ENCODE measurements at regions of chr1 and their contacts with region 1.

Region 1: GRCh38 chr1:61724813-61725694 is at the start of gene TM2D1:
- DNase-seq: peak; percentile 82 to 89
- ATAC-seq: peak; percentile 100
- H3K4me3 ChIP-seq: peak within 1 kb of the TSS; percentile 95
- H3K27ac ChIP-seq: peak within 1 kb of the TSS; percentile 90 to 91
- H3K4me1 ChIP-seq: peaks cover 13% of the 10 kb centered on the region; the same call in 1 of the 3 replicates
- CTCF ChIP-seq: no peak
- EP300 ChIP-seq: no peak
- POLR2A ChIP-seq: peak; percentile 96
- RAD21 ChIP-seq: no peak
- polyA plus RNA-seq, gene TM2D1: 42.9 and 54.2 TPM in 2 replicates

Region 2: GRCh38 chr1:61674221-61674620 is 50.8 kb before region 1 on chr1:
- CTCF ChIA-PET with region 1: no interaction called
- POLR2A ChIA-PET with region 1: no interaction called
- DNase-seq: no peak
- ATAC-seq: no peak
- H3K4me3 ChIP-seq: no peak overlapping the region
- H3K27ac ChIP-seq: no peak overlapping the region
- H3K4me1 ChIP-seq: 0 out of 3 replicates have a peak, but pooled peaks cover 5% of the 10 kb centered on the region
- CTCF ChIP-seq: no peak
- EP300 ChIP-seq: no peak
- POLR2A ChIP-seq: no peak
- RAD21 ChIP-seq: no peak

Region 3: DNA sequence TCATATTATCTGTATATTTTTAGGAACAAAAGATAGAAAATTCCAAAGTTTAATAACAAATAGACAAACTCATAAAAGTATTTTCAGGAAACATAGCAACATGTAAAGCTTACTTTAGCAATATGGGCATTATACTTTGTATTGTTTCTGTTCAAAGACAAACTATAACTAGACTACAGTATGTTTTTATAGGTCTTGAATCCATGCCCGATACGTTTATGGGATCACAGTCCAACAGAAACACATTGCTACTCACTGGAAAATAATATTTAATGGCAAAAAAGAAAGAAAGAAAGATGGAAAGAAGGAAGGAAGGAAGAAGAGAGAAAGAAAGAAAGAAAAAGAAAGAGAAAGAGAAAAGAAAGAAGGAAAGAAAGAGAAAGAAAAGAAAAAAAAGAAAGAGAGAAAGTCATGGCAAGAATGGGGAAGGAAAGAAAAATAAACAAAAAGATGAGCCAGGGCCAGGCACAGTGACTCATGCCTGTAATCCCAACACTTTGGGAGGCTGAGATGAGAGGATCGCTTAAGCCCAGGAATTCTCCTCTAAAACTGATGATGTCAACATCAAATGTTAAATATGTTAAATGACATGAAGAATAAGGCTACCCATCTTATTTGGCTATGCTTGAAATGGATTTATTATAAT is 32.8 kb before region 1 on chr1:
- CTCF ChIA-PET with region 1: no interaction called
- POLR2A ChIA-PET with region 1: no interaction called
- DNase-seq: peak in 1 of 2 experiments; percentile 44
- ATAC-seq: peak in 1 of 2 experiments; percentile 85; a peak in 3 of 6 replicates
- H3K4me3 ChIP-seq: no peak overlapping the region
- H3K27ac ChIP-seq: peak overlapping the region; percentile 35 to 57; a peak in 3 of 6 replicates
- H3K4me1 ChIP-seq: peaks cover 13% of the 10 kb centered on the region
- CTCF ChIP-seq: no peak
- EP300 ChIP-seq: no peak
- POLR2A ChIP-seq: no peak
- RAD21 ChIP-seq: no peak

Region 4: GRCh38 chr1:61776091-61776490 is 51.0 kb after region 1 on chr1:
- CTCF ChIA-PET with region 1: no interaction called
- POLR2A ChIA-PET with region 1: no interaction called
- DNase-seq: no peak
- ATAC-seq: no peak
- H3K4me3 ChIP-seq: no peak overlapping the region
- H3K27ac ChIP-seq: no peak overlapping the region
- H3K4me1 ChIP-seq: no peaks in the 10 kb centered on the region
- CTCF ChIP-seq: no peak
- EP300 ChIP-seq: no peak
- POLR2A ChIP-seq: no peak
- RAD21 ChIP-seq: no peak

Region 5: DNA sequence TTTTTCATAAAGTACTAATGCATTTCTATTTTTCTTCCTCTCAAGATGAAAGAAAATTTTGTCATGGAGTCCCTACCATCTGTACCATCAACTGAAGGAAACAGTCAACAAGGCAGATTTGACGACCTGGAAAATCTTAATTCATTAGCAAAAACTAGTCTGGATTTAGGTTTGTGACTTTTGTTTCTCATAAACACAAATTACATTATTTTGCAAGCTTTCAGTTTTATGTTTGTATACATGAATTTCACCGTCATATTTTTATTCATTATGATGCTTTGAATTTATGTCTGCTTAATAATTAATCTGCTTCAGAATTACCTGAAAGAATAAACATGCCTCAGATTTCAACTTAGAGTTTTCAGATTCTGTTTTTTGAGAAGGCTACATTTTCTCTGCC is 150.1 kb after region 1 on chr1:
- CTCF ChIA-PET with region 1: no interaction called
- POLR2A ChIA-PET with region 1: interaction called, 11 read pairs
- DNase-seq: no peak
- ATAC-seq: no peak
- H3K4me3 ChIP-seq: no peak overlapping the region
- H3K27ac ChIP-seq: no peak overlapping the region
- H3K4me1 ChIP-seq: no peaks in the 10 kb centered on the region
- CTCF ChIP-seq: no peak
- EP300 ChIP-seq: no peak
- POLR2A ChIP-seq: no peak
- RAD21 ChIP-seq: no peak